Prostate gland (tissue), 2 donors: ENCODE measurements at regions of chr6 and their contacts with region 1.

Region 1: GRCh38 chr6:64330694-64331307 is 695.2 kb downstream of the PHF3 start:
- DNase-seq: peak; percentile 47
- H3K4me3 ChIP-seq: no peak overlapping the region
- H3K27ac ChIP-seq: no peak overlapping the region
- H3K4me1 ChIP-seq: no peaks in the 10 kb centered on the region
- H3K27me3 ChIP-seq: no peaks in the 10 kb centered on the region
- CTCF ChIP-seq: peak in 3 of 4 experiments; percentile 48 to 51 (median 51)
- POLR2A ChIP-seq: no peak

Region 2: DNA sequence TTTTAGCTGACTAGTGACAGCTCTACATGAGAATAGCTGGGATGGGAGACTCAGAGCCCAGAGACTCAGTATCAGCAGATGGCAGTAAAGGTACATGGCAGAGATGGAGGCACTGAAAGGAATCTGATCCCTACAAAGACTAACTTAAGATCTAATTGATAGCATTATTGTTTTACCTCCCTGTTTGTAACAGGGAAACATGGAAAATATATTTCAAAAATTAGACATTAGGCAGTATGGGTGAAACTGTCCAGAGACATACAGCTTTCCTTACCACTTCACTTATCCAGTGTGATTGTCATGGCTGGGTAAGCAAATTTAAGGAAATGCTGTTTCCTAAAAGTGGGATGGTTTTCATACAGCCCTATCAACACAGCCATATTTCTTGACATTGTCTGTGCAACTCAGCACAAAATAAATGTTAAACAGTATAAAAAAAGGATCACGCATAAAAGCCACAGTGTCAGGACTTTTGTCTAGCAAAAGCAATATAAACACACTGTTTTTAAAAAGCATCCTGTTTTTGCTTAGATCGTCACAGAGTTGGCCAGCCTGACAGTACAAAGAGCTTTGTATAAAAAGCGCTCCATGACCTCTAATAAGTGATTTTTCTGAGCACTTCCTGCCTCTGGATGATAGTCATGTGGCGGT is 318.3 kb before region 1 on chr6:
- intact Hi-C with region 1: loop called (anchors 5 kb)
- DNase-seq: no peak
- H3K4me3 ChIP-seq: no peak overlapping the region
- H3K27ac ChIP-seq: no peak overlapping the region
- H3K4me1 ChIP-seq: no peaks in the 10 kb centered on the region
- H3K27me3 ChIP-seq: peaks cover 2% of the 10 kb centered on the region
- CTCF ChIP-seq: peak in 3 of 4 experiments; percentile 36 to 66 (median 55)
- POLR2A ChIP-seq: no peak

Region 3: GRCh38 chr6:64516393-64516792 is 185.6 kb after region 1 on chr6:
- intact Hi-C with region 1: no loop called
- DNase-seq: no peak
- H3K4me3 ChIP-seq: no peak overlapping the region
- H3K27ac ChIP-seq: no peak overlapping the region
- H3K4me1 ChIP-seq: no peaks in the 10 kb centered on the region
- H3K27me3 ChIP-seq: no peaks in the 10 kb centered on the region
- CTCF ChIP-seq: no peak
- POLR2A ChIP-seq: no peak